ENCODE measurements at regions of chr1 and their contacts with region 1.

Region 1: GRCh38 chr1:161098210-161099068 is at the start of gene KLHDC9:
- H3K4me3 ChIP-seq: peak within 1 kb of the TSS; percentile 74
- H3K27ac ChIP-seq: peak within 1 kb of the TSS; percentile 12; the same call in 1 of the 2 replicates
- H3K4me1 ChIP-seq: no peaks in the 10 kb centered on the region; the same call in 1 of the 2 replicates
- CTCF ChIP-seq: peak; percentile 87

Region 2: GRCh38 chr1:161038523-161039153 is 59.8 kb before region 1 on chr1 and contains the start of gene TSTD1:
- CTCF ChIA-PET with region 1: interaction called, 27 read pairs
- POLR2A ChIA-PET with region 1: no interaction called
- H3K4me3 ChIP-seq: peak within 1 kb of the TSS; percentile 89
- H3K27ac ChIP-seq: peak within 1 kb of the TSS; percentile 70
- H3K4me1 ChIP-seq: peaks cover 10% of the 10 kb centered on the region
- CTCF ChIP-seq: peak; percentile 61; the same call in 1 of the 2 replicates

Region 3: DNA sequence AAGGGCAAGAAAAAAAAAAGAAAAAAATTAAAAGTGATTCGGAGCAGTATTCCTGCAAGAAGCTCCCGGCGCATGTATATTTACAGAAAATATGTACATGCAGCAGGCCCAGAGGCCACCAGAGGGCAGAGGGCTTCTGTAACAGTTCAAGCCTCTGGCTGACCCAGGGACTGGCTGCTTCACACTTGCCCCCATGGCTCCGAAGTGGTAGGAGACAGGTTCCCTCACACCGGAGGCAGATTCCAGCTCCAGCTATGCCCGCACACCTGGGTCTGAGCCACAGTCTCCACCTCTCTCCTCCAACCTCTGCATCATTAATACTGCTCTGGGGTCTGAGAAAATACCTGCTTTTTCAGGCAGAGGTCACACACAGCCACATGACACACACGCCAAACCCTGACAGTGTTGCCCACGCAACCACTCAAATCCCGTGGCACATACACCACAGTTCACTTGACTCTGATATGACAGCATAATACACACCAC is 26.5 kb before region 1 on chr1:
- CTCF ChIA-PET with region 1: interaction called, 56 read pairs
- POLR2A ChIA-PET with region 1: interaction called, 5 read pairs
- H3K4me3 ChIP-seq: no peak overlapping the region; the same call in 1 of the 2 replicates
- H3K27ac ChIP-seq: no peak overlapping the region
- H3K4me1 ChIP-seq: no peaks in the 10 kb centered on the region
- CTCF ChIP-seq: peak; percentile 44; the same call in 1 of the 2 replicates

Region 4: GRCh38 chr1:161086165-161086874 is 12.1 kb before region 1 on chr1:
- CTCF ChIA-PET with region 1: interaction called, 17 read pairs
- POLR2A ChIA-PET with region 1: interaction called, 8 read pairs
- H3K4me3 ChIP-seq: no peak overlapping the region
- H3K27ac ChIP-seq: no peak overlapping the region
- H3K4me1 ChIP-seq: no peaks in the 10 kb centered on the region; the same call in 1 of the 2 replicates
- CTCF ChIP-seq: no peak

Region 5: GRCh38 chr1:161165742-161166668 is 67.6 kb after region 1 on chr1 and contains the start of gene PPOX:
- CTCF ChIA-PET with region 1: interaction called, 12 read pairs
- POLR2A ChIA-PET with region 1: interaction called, 3 read pairs
- H3K4me3 ChIP-seq: peak within 1 kb of the TSS; percentile 58
- H3K27ac ChIP-seq: peak within 1 kb of the TSS; percentile 39; the same call in 1 of the 2 replicates
- H3K4me1 ChIP-seq: peaks cover 3% of the 10 kb centered on the region; the same call in 1 of the 2 replicates
- CTCF ChIP-seq: peak; percentile 70